Activated CD4-positive, alpha-beta T cell treated with anti-CD3 and anti-CD28 coated beads, Interleukin-2, amount 10 ng/mL, durations not matched to agents 24 days and 14 days (primary cell): ENCODE measurements at regions of chr3 and their contacts with region 1.

Region 1: GRCh38 chr3:60192297-60193114 is 1058.7 kb downstream of the FHIT start:
- DNase-seq: peak; percentile 70
- H3K4me3 Mint-ChIP-seq: peak overlapping the region; percentile 45
- H3K27ac Mint-ChIP-seq: peak overlapping the region; percentile 90
- H3K4me1 Mint-ChIP-seq: peaks cover 48% of the 10 kb centered on the region
- H3K27me3 Mint-ChIP-seq: no peaks in the 10 kb centered on the region

Region 2: GRCh38 chr3:59873576-59874230 is 318.8 kb before region 1 on chr3:
- intact Hi-C with region 1: loop called (anchors 10 kb)
- DNase-seq: no peak
- H3K4me3 Mint-ChIP-seq: no peak overlapping the region
- H3K27ac Mint-ChIP-seq: peak overlapping the region; percentile 31
- H3K4me1 Mint-ChIP-seq: peaks cover 30% of the 10 kb centered on the region
- H3K27me3 Mint-ChIP-seq: no peaks in the 10 kb centered on the region

Region 3: GRCh38 chr3:60017631-60018030 is 174.9 kb before region 1 on chr3:
- intact Hi-C with region 1: loop called (anchors 2 kb)
- DNase-seq: peak; percentile 89
- H3K4me3 Mint-ChIP-seq: peak overlapping the region; percentile 73
- H3K27ac Mint-ChIP-seq: peak overlapping the region; percentile 94
- H3K4me1 Mint-ChIP-seq: peaks cover 51% of the 10 kb centered on the region
- H3K27me3 Mint-ChIP-seq: no peaks in the 10 kb centered on the region

Region 4: GRCh38 chr3:60365360-60365759 is 172.9 kb after region 1 on chr3:
- intact Hi-C with region 1: loop called (anchors 1 kb)
- DNase-seq: no peak
- H3K4me3 Mint-ChIP-seq: no peak overlapping the region
- H3K27ac Mint-ChIP-seq: peak overlapping the region; percentile 51
- H3K4me1 Mint-ChIP-seq: peaks cover 18% of the 10 kb centered on the region
- H3K27me3 Mint-ChIP-seq: no peaks in the 10 kb centered on the region

Region 5: GRCh38 chr3:61520966-61521628 is 1328.6 kb after region 1 on chr3:
- intact Hi-C with region 1: loop called (anchors 2 kb)
- DNase-seq: peak; percentile 84
- H3K4me3 Mint-ChIP-seq: peak overlapping the region; percentile 48
- H3K27ac Mint-ChIP-seq: peak overlapping the region; percentile 80
- H3K4me1 Mint-ChIP-seq: peaks cover 37% of the 10 kb centered on the region
- H3K27me3 Mint-ChIP-seq: no peaks in the 10 kb centered on the region